ENCODE measurements at regions of chr2 and their contacts with region 1.

Region 1: DNA sequence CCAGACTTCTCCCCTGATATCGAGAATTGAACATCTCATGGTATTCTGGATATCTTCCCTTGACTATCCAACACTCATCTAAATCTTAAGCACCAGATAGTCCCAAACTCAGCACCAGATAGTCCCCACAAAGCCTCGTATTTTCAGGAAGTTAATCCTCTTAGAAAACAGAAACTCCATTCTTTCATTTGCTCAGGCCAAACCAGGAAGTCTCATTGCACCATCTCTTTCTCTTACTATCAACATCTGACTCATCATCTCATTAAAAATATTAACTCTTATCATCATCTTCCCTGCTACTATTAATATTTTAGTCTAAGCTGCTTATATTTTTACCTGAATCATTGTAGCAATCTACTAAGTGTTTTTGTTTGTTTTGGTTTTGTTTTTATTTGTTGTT is 286.4 kb downstream of the GALNT13 start:
- DNase-seq: no peak
- ATAC-seq: no peak
- H3K4me3 ChIP-seq: no peak overlapping the region
- H3K27ac ChIP-seq: no peak overlapping the region
- H3K4me1 ChIP-seq: no peaks in the 10 kb centered on the region
- H3K27me3 ChIP-seq: no peaks in the 10 kb centered on the region
- CTCF ChIP-seq: no peak
- POLR2A ChIP-seq: no peak
- RAD21 ChIP-seq: no peak

Region 2: GRCh38 chr2:153912798-153913396 is 245.2 kb before region 1 on chr2:
- CTCF ChIA-PET with region 1: no interaction called
- POLR2A ChIA-PET with region 1: no interaction called
- RAD21 ChIA-PET with region 1: no interaction called
- intact Hi-C with region 1: loop called (anchors 10 kb)
- DNase-seq: no peak
- ATAC-seq: no peak
- H3K4me3 ChIP-seq: no peak overlapping the region
- H3K27ac ChIP-seq: no peak overlapping the region
- H3K4me1 ChIP-seq: no peaks in the 10 kb centered on the region
- H3K27me3 ChIP-seq: no peaks in the 10 kb centered on the region
- CTCF ChIP-seq: no peak
- POLR2A ChIP-seq: no peak
- RAD21 ChIP-seq: no peak